Activated CD8-positive, alpha-beta T cell treated with anti-CD3 and anti-CD28 coated beads, Interleukin-2, amount 10 ng/mL, durations not matched to agents 7 days and 5 days (primary cell): ENCODE measurements at regions of chr1 and their contacts with region 1.

Region 1: GRCh38 chr1:167599957-167600581 is 30.0 kb upstream of the RCSD1 start:
- DNase-seq: peak; percentile 71
- ATAC-seq: peak; percentile 84
- H3K4me3 Mint-ChIP-seq: peak overlapping the region; percentile 40
- H3K27ac Mint-ChIP-seq: peak overlapping the region; percentile 83
- H3K4me1 Mint-ChIP-seq: peaks cover 42% of the 10 kb centered on the region
- H3K27me3 Mint-ChIP-seq: peaks cover 2% of the 10 kb centered on the region

Region 2: GRCh38 chr1:167617153-167618147 is 17.4 kb after region 1 on chr1:
- CTCF ChIA-PET with region 1: interaction called, 57 read pairs
- POLR2A ChIA-PET with region 1: interaction called, 3 read pairs
- DNase-seq: peak; percentile 45
- ATAC-seq: peak; percentile 86
- H3K4me3 Mint-ChIP-seq: peak overlapping the region; percentile 68
- H3K27ac Mint-ChIP-seq: peak overlapping the region; percentile 95
- H3K4me1 Mint-ChIP-seq: peaks cover 58% of the 10 kb centered on the region
- H3K27me3 Mint-ChIP-seq: no peaks in the 10 kb centered on the region

Region 3: GRCh38 chr1:167627865-167628641 is 28.0 kb after region 1 on chr1:
- CTCF ChIA-PET with region 1: interaction called, 334 read pairs
- POLR2A ChIA-PET with region 1: interaction called, 96 read pairs
- DNase-seq: peak; percentile 89
- ATAC-seq: peak; percentile 83
- H3K4me3 Mint-ChIP-seq: peak overlapping the region; percentile 98
- H3K27ac Mint-ChIP-seq: peak overlapping the region; percentile 91
- H3K4me1 Mint-ChIP-seq: peaks cover 66% of the 10 kb centered on the region
- H3K27me3 Mint-ChIP-seq: no peaks in the 10 kb centered on the region

Region 4: GRCh38 chr1:167635156-167635648 is 35.1 kb after region 1 on chr1:
- CTCF ChIA-PET with region 1: interaction called, 334 read pairs
- POLR2A ChIA-PET with region 1: interaction called, 96 read pairs
- DNase-seq: no peak
- ATAC-seq: no peak
- H3K4me3 Mint-ChIP-seq: no peak overlapping the region
- H3K27ac Mint-ChIP-seq: no peak overlapping the region
- H3K4me1 Mint-ChIP-seq: peaks cover 80% of the 10 kb centered on the region
- H3K27me3 Mint-ChIP-seq: no peaks in the 10 kb centered on the region

Region 5: GRCh38 chr1:167650269-167651160 is 50.4 kb after region 1 on chr1:
- CTCF ChIA-PET with region 1: interaction called, 28 read pairs
- POLR2A ChIA-PET with region 1: interaction called, 9 read pairs
- DNase-seq: peak; percentile 47
- ATAC-seq: peak; percentile 72
- H3K4me3 Mint-ChIP-seq: peak overlapping the region; percentile 38
- H3K27ac Mint-ChIP-seq: peak overlapping the region; percentile 87
- H3K4me1 Mint-ChIP-seq: peaks cover 72% of the 10 kb centered on the region
- H3K27me3 Mint-ChIP-seq: no peaks in the 10 kb centered on the region

Region 6: DNA sequence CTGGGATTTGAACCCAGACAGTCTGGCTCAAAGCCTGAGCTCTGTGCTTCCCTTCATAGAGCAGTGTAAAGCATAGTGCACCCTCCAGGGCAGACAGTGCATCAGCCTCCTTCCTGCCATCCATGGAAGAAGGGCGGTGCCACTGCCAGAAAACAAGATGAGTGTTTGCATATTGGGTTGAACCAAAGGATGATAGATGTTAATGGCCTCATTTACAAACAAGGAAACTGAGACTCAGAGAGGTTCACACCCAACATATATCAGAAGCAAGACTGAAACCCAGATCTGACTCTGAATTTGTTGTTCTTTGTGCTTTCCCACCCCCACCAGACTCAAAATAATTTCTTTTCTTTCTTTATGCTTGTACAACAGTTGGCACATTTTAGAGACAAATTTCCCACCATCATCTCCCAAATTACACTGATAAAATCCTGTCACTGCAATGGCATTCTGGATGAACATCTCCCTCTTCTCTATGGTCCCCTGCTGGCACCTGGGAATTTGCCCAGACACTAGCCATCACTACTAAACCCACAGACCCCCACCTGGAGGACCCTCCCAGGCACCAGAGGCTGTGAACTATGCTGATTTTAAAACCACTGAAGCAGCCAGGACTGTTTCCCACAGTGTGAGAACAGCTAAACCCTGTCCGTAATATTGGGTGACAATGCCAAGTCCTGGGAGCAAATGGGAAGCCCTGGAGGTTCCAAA is 76.3 kb after region 1 on chr1:
- CTCF ChIA-PET with region 1: interaction called, 20 read pairs
- POLR2A ChIA-PET with region 1: no interaction called
- DNase-seq: no peak
- ATAC-seq: no peak
- H3K4me3 Mint-ChIP-seq: no peak overlapping the region
- H3K27ac Mint-ChIP-seq: peak overlapping the region; percentile 12
- H3K4me1 Mint-ChIP-seq: peaks cover 22% of the 10 kb centered on the region
- H3K27me3 Mint-ChIP-seq: no peaks in the 10 kb centered on the region

Region 7: DNA sequence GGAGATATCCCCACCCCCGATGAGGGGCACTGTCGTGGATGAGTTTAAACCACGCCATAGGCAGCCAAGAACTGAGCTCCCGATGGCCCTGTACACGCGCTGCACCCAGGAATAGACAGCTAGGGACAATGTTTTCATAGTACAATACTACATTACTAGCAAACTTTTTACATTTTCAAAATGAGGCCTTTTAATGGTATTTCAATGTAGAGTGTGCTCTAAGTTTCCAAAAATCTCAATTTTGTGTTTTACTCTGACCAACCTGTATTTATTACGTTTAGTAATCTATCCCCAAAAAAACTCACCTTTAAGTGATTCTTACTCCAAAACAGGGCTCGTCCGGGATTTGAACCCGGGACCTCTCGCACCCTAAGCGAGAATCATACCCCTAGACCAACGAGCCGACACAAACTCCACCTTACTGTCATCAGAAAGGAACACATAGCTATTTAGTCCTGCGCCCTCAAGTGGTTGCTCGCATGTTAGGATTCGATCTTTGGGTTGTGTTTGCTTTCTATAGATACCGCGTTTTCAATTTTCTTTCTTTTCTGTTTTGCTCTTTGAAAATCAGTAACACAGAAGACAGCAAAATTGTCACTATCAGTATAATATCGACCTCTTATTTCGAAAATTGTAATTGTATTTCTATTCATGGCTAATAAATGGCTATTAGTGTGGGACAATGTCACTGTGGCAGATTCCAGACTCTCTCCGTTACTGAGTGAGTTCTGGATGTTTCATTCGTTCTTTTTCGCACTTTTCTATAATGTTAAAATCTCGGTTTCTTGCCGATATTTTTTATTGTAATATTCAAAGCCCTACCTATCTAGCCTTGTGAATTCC is 115.3 kb after region 1 on chr1:
- CTCF ChIA-PET with region 1: interaction called, 35 read pairs
- POLR2A ChIA-PET with region 1: interaction called, 4 read pairs
- DNase-seq: peak; percentile 94
- ATAC-seq: peak; percentile 54
- H3K4me3 Mint-ChIP-seq: peak overlapping the region; percentile 91
- H3K27ac Mint-ChIP-seq: peak overlapping the region; percentile 96
- H3K4me1 Mint-ChIP-seq: peaks cover 34% of the 10 kb centered on the region
- H3K27me3 Mint-ChIP-seq: peaks cover 11% of the 10 kb centered on the region